Heart right ventricle (tissue), 16 donors: ENCODE measurements at regions of chr2 and their contacts with region 1.

Region 1: DNA sequence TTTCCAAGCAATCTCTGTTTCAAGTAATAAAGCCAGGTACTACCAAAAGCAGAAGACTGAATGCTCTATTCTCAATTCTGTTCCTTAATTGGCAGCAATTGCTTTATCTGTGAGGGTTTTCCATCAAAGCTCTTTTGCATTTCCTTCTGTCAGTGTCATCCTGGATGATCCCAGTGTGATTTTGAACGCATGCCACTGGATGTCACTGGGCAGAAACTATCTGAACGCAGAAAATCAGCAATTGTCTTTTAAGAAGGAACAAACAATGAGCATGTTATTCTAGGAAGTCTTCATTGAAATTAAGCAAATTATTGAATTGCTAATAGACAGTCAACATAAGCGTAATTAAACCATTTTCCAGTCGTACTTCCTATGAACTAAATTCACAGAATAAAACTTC is 259.0 kb upstream of the REG3G start:
- DNase-seq: no peak
- ATAC-seq: no peak
- H3K4me3 ChIP-seq: no peak overlapping the region
- H3K27ac ChIP-seq: no peak overlapping the region
- H3K4me1 ChIP-seq: no peaks in the 10 kb centered on the region
- H3K27me3 ChIP-seq: no peaks in the 10 kb centered on the region
- CTCF ChIP-seq: no peak

Region 2: GRCh38 chr2:78644854-78645253 is 121.6 kb before region 1 on chr2:
- intact Hi-C with region 1: no loop called
- DNase-seq: no peak
- ATAC-seq: no peak
- H3K4me3 ChIP-seq: no peak overlapping the region
- H3K27ac ChIP-seq: no peak overlapping the region
- H3K4me1 ChIP-seq: no peaks in the 10 kb centered on the region
- H3K27me3 ChIP-seq: no peaks in the 10 kb centered on the region
- CTCF ChIP-seq: no peak

Region 3: DNA sequence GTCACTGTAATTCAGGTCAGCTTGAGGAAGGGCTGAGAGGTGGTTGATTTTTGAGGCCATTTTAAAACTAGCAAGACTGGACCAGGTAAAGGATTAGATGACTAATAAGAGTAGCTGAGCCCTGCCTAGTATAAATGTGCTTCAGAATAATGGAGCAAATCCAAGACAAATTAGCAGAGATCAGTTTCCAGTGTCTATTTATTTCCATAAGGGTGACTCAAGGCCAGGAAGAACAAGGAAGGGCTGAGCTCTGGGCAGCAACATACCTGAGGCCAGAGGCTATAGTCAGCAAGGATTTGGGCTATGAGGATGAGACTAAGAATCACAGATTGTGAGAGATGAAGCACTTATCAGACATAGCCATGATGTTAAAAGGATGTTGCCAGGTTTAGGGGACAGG is 1877.1 kb after region 1 on chr2:
- intact Hi-C with region 1: loop called in 1 of 10 experiments (anchors 5 kb)
- DNase-seq: no peak
- ATAC-seq: no peak
- H3K4me3 ChIP-seq: no peak overlapping the region
- H3K27ac ChIP-seq: no peak overlapping the region
- H3K4me1 ChIP-seq: no peaks in the 10 kb centered on the region
- H3K27me3 ChIP-seq: no peaks in the 10 kb centered on the region
- CTCF ChIP-seq: no peak